ENCODE measurements at regions of chr9 and their contacts with region 1.

Region 1: DNA sequence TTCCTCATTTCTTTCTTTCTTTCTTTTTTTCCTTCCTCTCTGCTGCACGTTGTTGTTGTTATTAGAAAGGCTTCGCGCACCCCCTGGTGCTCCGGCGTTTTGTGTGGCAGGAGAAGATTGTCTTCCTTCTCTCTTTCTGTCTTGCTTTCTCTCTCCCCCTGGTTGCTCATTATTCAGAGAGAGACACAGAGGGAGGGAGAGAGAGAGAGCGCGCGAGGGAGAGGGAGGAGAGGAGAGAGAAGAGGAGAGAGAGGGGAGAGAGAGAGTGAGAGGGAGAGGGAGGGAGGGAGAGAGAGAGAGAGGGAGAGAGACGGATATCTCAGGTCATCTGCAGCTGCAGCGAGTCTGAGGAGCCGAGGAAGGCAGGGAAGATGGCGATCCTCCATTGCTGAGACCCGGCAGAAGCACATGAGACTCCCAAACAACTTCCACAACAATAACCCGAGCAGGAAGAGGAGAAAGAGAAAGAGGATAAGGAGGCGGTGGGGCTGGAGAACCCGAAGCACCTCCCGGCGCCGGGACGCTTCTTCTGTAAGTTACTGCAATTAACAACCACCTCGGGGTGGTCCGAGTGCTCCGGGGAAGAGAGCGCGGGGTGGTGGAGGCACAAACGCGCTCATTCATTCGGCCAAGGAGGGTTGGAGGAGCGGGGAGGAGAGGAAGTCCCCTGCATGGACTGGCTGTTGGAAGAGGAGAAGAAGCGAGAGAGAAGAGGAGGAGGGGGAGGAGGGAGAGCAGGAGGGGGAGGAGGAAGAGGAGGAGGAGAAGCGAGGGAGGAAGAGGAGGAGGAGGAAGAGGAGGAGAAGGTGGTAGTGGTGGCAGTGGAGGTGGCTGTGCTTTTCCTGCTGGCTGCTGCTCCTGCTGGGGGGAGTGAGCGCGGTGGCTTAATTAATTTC is at the start of gene ZNF462:
- DNase-seq: peak; percentile 59
- H3K4me3 ChIP-seq: peak within 1 kb of the TSS; percentile 64 to 91
- H3K27ac ChIP-seq: peak within 1 kb of the TSS; percentile 84 to 96
- H3K4me1 ChIP-seq: no peaks in the 10 kb centered on the region; a peak in 2 of 4 replicates
- H3K27me3 ChIP-seq: no peaks in the 10 kb centered on the region; the same call in 1 of the 2 replicates
- CTCF ChIP-seq: peak; percentile 48
- EP300 ChIP-seq: no peak
- RAD21 ChIP-seq: peak; percentile 68
- polyA plus RNA-seq, gene ZNF462: 5.2 and 5.5 TPM in 2 replicates

Region 2: DNA sequence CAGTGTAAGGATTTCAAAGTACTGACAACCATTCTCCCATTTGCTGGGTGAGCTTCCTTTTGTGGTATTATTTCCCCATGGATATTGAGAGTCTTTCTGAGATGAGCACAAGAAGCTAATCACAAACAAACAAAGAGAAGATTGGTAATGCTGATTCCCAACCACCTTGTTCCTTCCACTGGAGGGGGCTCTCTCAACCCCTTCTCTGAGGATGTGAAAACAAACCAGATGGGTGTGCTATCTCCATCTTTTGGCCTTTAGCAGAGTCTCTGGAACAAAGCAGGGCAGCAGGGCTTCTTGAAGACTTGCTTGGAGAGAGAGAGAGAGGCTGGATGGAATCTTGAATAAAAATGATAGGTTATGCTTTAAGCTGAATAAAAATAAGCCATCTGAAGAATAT is 576.8 kb before region 1 on chr9:
- CTCF ChIA-PET with region 1: interaction called, 14 read pairs
- POLR2A ChIA-PET with region 1: no interaction called
- DNase-seq: peak; percentile 39
- H3K4me3 ChIP-seq: peak overlapping the region in 1 of 2 experiments; percentile 39; a peak in 1 of 4 replicates
- H3K27ac ChIP-seq: peak overlapping the region in 1 of 2 experiments; percentile 86; a peak in 1 of 4 replicates
- H3K4me1 ChIP-seq: peaks cover 0 to 25% of the 10 kb centered on the region in 2 experiments; a peak in 2 of 4 replicates
- H3K27me3 ChIP-seq: no peaks in the 10 kb centered on the region
- CTCF ChIP-seq: peak; percentile 22; the same call in 1 of the 2 replicates
- EP300 ChIP-seq: no peak
- RAD21 ChIP-seq: peak; percentile 59

Region 3: DNA sequence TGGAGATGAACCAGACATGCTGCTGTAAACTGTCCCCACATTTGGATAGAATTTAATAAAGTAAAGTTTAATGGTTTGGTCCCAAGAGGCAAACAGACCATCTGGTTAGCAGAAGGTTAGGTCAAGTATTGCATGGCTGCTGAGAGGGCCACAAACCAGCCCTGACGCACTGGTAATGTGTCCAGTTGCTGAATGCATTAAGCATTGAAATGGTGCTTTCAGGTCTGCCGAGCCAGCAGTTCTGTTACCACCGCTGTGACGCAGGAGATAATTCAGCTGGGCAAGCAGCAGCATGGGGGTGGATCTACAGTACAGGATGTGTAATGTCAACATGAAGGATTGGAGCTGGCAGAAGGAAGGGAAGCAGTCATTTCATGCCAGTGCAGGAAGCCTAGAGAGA is 15.9 kb after region 1 on chr9:
- CTCF ChIA-PET with region 1: interaction called, 15 read pairs
- POLR2A ChIA-PET with region 1: interaction called, 10 read pairs
- DNase-seq: peak; percentile 61
- H3K4me3 ChIP-seq: no peak overlapping the region
- H3K27ac ChIP-seq: peak overlapping the region; percentile 56 to 92
- H3K4me1 ChIP-seq: peaks cover 8 to 37% of the 10 kb centered on the region in 2 experiments
- H3K27me3 ChIP-seq: no peaks in the 10 kb centered on the region
- CTCF ChIP-seq: no peak
- EP300 ChIP-seq: peak in 1 of 2 experiments; percentile 38; a peak in 1 of 4 replicates
- RAD21 ChIP-seq: peak; percentile 11; the same call in 1 of the 2 replicates